Left lung (tissue), 14 donors: ENCODE measurements at regions of chr5 and their contacts with region 1.

Region 1: GRCh38 chr5:140372971-140373487 is 13.0 kb downstream of the SLC4A9 start:
- DNase-seq: peak in 3 of 4 donors; percentile 60 to 80 (median 70)
- ATAC-seq: peak; percentile 85
- H3K4me3 ChIP-seq: no peak overlapping the region
- H3K27ac ChIP-seq: no peak overlapping the region
- H3K4me1 ChIP-seq: peaks cover 3 to 7% of the 10 kb centered on the region in 2 donors
- H3K27me3 ChIP-seq: no peaks in the 10 kb centered on the region
- CTCF ChIP-seq: peak; percentile 81 to 87

Region 2: GRCh38 chr5:140647042-140647341 is 274.0 kb after region 1 on chr5:
- intact Hi-C with region 1: loop called in 1 of 2 experiments (anchors 10 kb)
- DNase-seq: no peak
- ATAC-seq: peak; percentile 29
- H3K4me3 ChIP-seq: peak overlapping the region; percentile 78 to 82
- H3K27ac ChIP-seq: peak overlapping the region; percentile 53 to 84
- H3K4me1 ChIP-seq: peaks cover 6 to 28% of the 10 kb centered on the region in 2 donors
- H3K27me3 ChIP-seq: no peaks in the 10 kb centered on the region
- CTCF ChIP-seq: no peak